CD14-positive monocyte (primary cell): ENCODE measurements at regions of chr5 and their contacts with region 1.

Region 1: DNA sequence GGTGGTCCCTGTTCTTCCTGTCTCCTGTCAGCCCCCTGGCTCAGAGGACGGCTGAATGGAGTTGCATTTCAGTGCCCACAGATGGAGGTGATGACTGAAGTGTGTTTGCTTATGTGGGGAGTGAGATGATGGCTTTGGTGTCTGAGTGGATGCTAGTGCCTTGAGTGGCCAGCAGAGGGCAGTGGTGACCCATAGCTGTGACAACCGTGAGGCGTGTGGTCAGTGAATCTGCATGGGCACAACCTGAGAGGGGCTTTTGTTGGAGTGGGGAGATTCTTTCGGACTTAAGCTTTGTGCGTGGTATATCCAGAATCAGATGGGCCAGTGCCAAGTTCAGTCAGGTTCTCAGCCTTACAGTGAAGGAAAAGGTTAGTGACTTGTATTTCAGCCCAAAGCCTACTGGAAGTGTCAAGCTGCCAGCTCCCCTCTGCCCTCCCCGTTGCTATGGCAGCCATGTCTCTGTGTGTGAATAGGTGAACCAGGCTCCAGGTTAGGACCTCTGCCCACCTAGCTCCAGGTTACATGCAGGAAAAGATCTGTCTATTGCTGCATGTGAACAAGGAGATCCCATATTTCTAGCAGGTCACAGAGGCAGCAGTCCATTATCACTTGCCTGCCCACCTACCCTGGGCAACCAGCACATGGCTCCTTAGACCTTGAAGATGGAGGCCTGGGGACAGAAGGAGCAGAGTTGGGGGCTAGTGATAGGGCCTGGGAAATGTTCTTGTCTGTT is 14.7 kb upstream of the CXXC5 start:
- DNase-seq: peak; percentile 68 to 78 (median 74)
- H3K4me3 ChIP-seq: no peak overlapping the region
- H3K4me3 Mint-ChIP-seq: peak overlapping the region in 1 of 2 donors; percentile 4
- H3K27ac ChIP-seq: no peak overlapping the region
- H3K27ac Mint-ChIP-seq: peak overlapping the region in 3 of 7 donors; percentile 37 to 66 (median 39)
- H3K4me1 ChIP-seq: peaks cover 31 to 36% of the 10 kb centered on the region in 2 donors
- H3K4me1 Mint-ChIP-seq: peaks cover 32% of the 10 kb centered on the region
- H3K27me3 ChIP-seq: peaks cover 0 to 9% of the 10 kb centered on the region in 2 donors
- H3K27me3 Mint-ChIP-seq: peaks cover 9 to 22% (median 14%) of the 10 kb centered on the region in 3 donors
- CTCF ChIP-seq: peak; percentile 91

Region 2: DNA sequence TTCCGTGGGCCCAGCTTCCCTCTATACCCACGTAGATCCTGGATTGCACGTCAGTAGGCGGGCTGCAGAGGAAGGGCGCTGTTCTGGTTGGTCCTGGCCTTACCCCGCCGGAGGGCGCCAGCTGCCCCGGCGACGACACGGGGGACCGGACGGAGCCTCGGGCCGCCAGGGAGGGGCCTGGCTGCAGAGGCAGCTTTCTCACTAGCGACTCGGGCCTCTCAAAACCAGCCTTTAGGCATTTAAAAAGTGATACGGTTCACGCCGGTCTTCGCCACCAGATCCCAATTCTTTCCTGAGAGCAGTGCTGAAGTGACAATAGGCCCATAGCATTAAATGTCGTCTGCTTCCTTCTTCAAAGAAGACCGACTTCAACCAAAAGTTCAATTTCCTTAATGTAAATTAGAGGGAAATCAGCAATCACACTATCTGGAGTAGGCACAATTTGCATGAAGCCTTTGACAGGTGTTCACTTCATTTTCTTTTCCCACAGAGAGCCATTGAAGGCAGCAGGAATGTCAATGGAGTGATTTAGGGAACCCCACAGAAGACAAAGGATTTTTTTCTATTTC is 90.0 kb before region 1 on chr5:
- intact Hi-C with region 1: no loop called
- DNase-seq: peak; percentile 60 to 68 (median 61)
- H3K4me3 ChIP-seq: peak overlapping the region; percentile 23 to 67 (median 26)
- H3K4me3 Mint-ChIP-seq: peak overlapping the region; percentile 50 to 84
- H3K27ac ChIP-seq: peak overlapping the region in 1 of 2 donors; percentile 2
- H3K27ac Mint-ChIP-seq: peak overlapping the region in 1 of 7 donors; percentile 30
- H3K4me1 ChIP-seq: peaks cover 0 to 13% of the 10 kb centered on the region in 2 donors
- H3K4me1 Mint-ChIP-seq: peaks cover 10% of the 10 kb centered on the region
- H3K27me3 ChIP-seq: no peaks in the 10 kb centered on the region
- H3K27me3 Mint-ChIP-seq: peaks cover 5 to 8% (median 6%) of the 10 kb centered on the region in 3 donors
- CTCF ChIP-seq: no peak

Region 3: GRCh38 chr5:139651853-139652787 is 18.7 kb after region 1 on chr5:
- intact Hi-C with region 1: loop called (anchors 1 kb)
- DNase-seq: peak; percentile 64 to 82 (median 67)
- H3K4me3 ChIP-seq: peak overlapping the region in 1 of 3 experiments; percentile 89
- H3K4me3 Mint-ChIP-seq: peak overlapping the region; percentile 99 to 100
- H3K27ac ChIP-seq: peak overlapping the region in 1 of 2 donors; percentile 52
- H3K27ac Mint-ChIP-seq: peak overlapping the region; percentile 43 to 92 (median 66)
- H3K4me1 ChIP-seq: peaks cover 53 to 65% of the 10 kb centered on the region in 2 donors
- H3K4me1 Mint-ChIP-seq: peaks cover 60% of the 10 kb centered on the region
- H3K27me3 ChIP-seq: peaks cover 5 to 46% of the 10 kb centered on the region in 2 donors
- H3K27me3 Mint-ChIP-seq: peaks cover 37 to 72% (median 47%) of the 10 kb centered on the region in 3 donors
- CTCF ChIP-seq: no peak

Region 4: DNA sequence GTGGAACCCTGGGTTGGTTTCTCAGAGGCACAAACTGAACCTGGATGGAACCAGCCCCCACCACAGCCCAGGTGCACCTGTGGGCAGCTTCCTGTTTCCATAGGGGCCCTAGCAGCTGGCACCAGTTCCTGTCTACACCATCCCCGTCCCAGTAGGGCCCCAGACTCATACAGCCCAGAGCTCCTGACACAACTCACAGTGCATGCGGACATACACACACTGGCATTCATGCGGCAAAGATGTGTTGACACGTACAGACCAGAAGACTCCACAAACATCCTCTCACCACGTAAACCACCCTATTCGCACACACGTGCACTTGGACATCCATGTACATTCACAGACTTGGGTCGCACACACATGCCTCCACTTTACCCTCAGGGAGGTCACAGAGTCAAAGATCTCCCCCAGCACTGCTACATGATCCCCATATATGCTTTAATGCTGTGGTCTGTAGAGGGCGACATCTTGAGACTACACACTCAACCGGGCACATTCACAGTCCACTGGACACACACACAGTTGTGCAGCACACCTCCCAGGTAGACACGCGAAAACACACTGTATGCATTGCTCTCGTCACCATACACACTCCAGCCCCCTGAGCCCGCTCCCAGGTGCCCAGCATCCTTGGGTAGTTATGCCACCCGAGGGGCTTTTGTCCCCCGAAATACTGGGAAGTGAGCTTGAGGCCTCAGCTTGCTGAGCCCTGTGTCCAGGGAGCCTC is 37.1 kb after region 1 on chr5:
- intact Hi-C with region 1: loop called in 1 of 2 experiments (anchors 5 kb)
- DNase-seq: peak in 1 of 3 donors; percentile 42
- H3K4me3 ChIP-seq: peak overlapping the region in 1 of 3 experiments; percentile 28
- H3K4me3 Mint-ChIP-seq: peak overlapping the region; percentile 45 to 83
- H3K27ac ChIP-seq: no peak overlapping the region
- H3K27ac Mint-ChIP-seq: peak overlapping the region in 5 of 7 donors; percentile 33 to 75 (median 63)
- H3K4me1 ChIP-seq: peaks cover 61 to 63% of the 10 kb centered on the region in 2 donors
- H3K4me1 Mint-ChIP-seq: peaks cover 56% of the 10 kb centered on the region
- H3K27me3 ChIP-seq: peaks cover 0 to 18% of the 10 kb centered on the region in 2 donors
- H3K27me3 Mint-ChIP-seq: peaks cover 13 to 36% (median 24%) of the 10 kb centered on the region in 3 donors
- CTCF ChIP-seq: peak; percentile 46

Region 5: GRCh38 chr5:139690064-139690802 is 56.8 kb after region 1 on chr5:
- intact Hi-C with region 1: loop called (anchors 1 to 2 kb)
- DNase-seq: peak in 2 of 3 donors; percentile 51 to 73
- H3K4me3 ChIP-seq: no peak overlapping the region
- H3K4me3 Mint-ChIP-seq: peak overlapping the region in 1 of 2 donors; percentile 13
- H3K27ac ChIP-seq: no peak overlapping the region
- H3K27ac Mint-ChIP-seq: peak overlapping the region in 2 of 7 donors; percentile 40 to 72
- H3K4me1 ChIP-seq: peaks cover 6 to 25% of the 10 kb centered on the region in 2 donors
- H3K4me1 Mint-ChIP-seq: peaks cover 19% of the 10 kb centered on the region
- H3K27me3 ChIP-seq: peaks cover 0 to 26% of the 10 kb centered on the region in 2 donors
- H3K27me3 Mint-ChIP-seq: peaks cover 27 to 44% (median 40%) of the 10 kb centered on the region in 3 donors
- CTCF ChIP-seq: peak; percentile 62

Region 6: DNA sequence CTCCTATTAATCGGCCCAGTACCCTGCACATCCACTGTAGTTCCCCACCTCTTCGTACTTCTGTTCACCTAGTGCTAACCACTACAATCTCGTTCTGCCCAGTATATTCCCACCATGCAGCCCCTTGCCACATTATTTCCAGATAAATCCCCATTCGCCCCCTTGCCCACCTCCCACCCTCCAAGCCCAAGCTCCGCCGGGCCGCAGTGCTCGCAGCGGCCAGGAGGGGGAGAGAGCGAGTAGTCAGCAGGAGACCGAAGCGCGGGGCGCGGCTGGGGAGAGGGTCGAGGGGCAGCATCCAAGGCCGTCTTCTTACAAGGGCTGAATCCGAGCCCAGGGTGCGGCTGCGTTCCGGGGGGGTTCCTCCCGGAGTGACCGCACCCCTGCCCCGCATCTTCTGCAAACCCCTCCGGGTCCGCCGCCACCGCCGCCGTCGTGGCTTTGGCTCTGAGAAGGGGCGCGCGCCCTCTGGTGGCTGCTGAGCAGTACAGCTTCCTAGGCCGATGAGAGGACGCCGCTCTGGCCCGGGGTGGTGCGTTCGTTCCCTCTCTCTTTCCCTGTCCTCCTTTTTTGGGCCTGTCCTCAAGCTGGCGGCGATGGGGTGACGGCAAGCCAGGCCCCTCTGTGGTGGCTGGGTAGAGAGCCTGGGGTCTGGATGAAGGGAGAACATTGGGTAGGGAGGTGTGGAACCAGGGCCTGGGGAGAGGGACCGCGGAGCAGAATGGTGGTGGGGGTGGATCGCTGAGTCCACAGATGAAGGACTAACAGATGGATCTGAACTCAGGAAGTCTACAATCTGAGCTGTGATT is 132.2 kb after region 1 on chr5:
- intact Hi-C with region 1: loop called (anchors 1 to 2 kb)
- DNase-seq: peak; percentile 69 to 73 (median 70)
- H3K4me3 ChIP-seq: peak overlapping the region; percentile 33 to 77 (median 58)
- H3K4me3 Mint-ChIP-seq: peak overlapping the region; percentile 71
- H3K27ac ChIP-seq: peak overlapping the region in 1 of 2 donors; percentile 55
- H3K27ac Mint-ChIP-seq: peak overlapping the region in 4 of 7 donors; percentile 24 to 53 (median 36)
- H3K4me1 ChIP-seq: no peaks in the 10 kb centered on the region
- H3K4me1 Mint-ChIP-seq: peaks cover 7% of the 10 kb centered on the region
- H3K27me3 ChIP-seq: peaks cover 25 to 41% of the 10 kb centered on the region in 2 donors
- H3K27me3 Mint-ChIP-seq: peaks cover 39 to 52% (median 42%) of the 10 kb centered on the region in 3 donors
- CTCF ChIP-seq: peak; percentile 100

Region 7: GRCh38 chr5:139968547-139969261 is 335.2 kb after region 1 on chr5:
- intact Hi-C with region 1: loop called in 1 of 2 experiments (anchors 5 kb)
- DNase-seq: peak; percentile 70 to 74 (median 72)
- H3K4me3 ChIP-seq: no peak overlapping the region
- H3K4me3 Mint-ChIP-seq: no peak overlapping the region
- H3K27ac ChIP-seq: no peak overlapping the region
- H3K27ac Mint-ChIP-seq: no peak overlapping the region
- H3K4me1 ChIP-seq: no peaks in the 10 kb centered on the region
- H3K4me1 Mint-ChIP-seq: peaks cover 4% of the 10 kb centered on the region
- H3K27me3 ChIP-seq: peaks cover 5 to 7% of the 10 kb centered on the region in 2 donors
- H3K27me3 Mint-ChIP-seq: peaks cover 13 to 30% (median 17%) of the 10 kb centered on the region in 3 donors
- CTCF ChIP-seq: peak; percentile 100